ENCODE measurements at regions of chr16 and their contacts with region 1.

Region 1: GRCh38 chr16:80526425-80527061 is 14.2 kb upstream of the DYNLRB2 start:
- DNase-seq: peak; percentile 7
- H3K4me3 ChIP-seq: no peak overlapping the region
- H3K27me3 ChIP-seq: no peaks in the 10 kb centered on the region
- CTCF ChIP-seq: peak; percentile 89

Region 2: GRCh38 chr16:80515374-80515773 is 11.2 kb before region 1 on chr16:
- CTCF ChIA-PET with region 1: interaction called, 10 read pairs
- POLR2A ChIA-PET with region 1: no interaction called
- DNase-seq: no peak
- H3K4me3 ChIP-seq: no peak overlapping the region
- H3K27me3 ChIP-seq: no peaks in the 10 kb centered on the region
- CTCF ChIP-seq: no peak

Region 3: DNA sequence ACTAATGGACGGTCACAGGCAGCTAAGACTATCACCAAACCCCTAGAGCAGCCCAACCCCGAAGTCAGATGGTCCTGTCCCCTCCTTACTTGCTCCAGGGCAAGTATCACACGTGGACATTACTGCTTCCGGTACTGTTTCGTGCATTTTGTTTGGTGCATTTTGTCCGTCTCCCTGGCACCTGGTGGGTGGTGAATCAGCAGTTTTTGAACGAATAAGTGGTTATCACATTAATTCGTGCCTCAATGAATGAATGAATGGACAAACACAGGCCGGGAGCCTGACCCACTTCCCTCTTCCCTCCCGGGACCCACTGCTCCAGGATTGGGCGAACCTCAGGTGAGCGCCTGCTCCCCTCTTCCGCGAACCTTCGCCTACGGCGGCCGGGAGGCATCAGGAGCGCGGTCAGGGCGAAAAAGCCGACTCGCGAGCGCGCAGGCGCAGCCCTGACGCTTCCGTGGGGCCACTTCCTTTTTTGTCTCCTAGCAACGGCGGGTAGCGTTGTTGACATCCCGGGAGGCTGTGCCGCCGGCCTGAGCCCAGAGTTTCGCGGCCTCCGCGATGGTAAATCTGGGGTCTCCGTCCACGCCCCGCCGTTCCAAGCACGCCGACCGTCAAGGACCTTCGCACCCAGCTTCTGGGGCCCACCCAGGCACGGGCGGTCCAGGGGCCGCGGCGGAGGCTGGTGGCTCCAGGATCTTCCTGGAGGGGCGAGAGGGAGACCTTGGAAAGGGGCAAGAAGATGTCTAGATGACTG is 14.2 kb after region 1 on chr16 and contains the start of gene DYNLRB2:
- CTCF ChIA-PET with region 1: interaction called, 14 read pairs
- POLR2A ChIA-PET with region 1: no interaction called
- DNase-seq: peak; percentile 58
- H3K4me3 ChIP-seq: peak within 1 kb of the TSS; percentile 70
- H3K27me3 ChIP-seq: no peaks in the 10 kb centered on the region
- CTCF ChIP-seq: no peak
- polyA plus RNA-seq, gene DYNLRB2: 0.50 and 1.4 TPM in 2 replicates

Region 4: DNA sequence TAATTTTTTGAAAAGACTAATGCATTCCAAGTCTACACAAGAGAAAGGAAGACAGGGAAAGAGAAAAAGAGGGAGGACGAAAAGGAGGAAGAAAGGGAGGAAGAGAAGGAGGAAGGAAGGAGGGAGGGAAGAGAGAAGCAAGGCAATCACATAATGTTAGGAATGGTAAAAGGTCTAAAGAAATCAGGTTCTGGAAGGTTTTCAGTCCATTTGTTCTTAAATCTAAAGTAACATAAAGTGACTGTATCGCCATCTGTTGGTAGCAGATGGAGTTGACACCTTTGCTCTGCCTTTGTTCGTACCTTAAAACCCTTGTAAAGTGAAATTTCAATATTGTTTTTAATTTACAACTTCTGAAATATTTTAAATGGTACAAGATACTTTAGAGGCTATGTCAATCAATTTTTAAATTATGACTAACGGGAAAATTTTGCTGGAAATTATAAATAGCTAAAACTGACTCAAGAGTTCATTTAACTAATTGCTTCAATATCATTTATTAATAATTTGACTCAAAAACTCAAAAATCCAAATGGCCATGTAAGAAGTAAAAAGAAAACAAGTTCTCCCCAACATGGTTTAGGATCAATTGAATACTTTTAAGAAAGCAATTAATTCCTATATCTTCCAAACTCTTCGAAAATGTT is 298.3 kb after region 1 on chr16:
- CTCF ChIA-PET with region 1: interaction called, 14 read pairs
- POLR2A ChIA-PET with region 1: no interaction called
- DNase-seq: peak; percentile 11
- H3K4me3 ChIP-seq: no peak overlapping the region
- H3K27me3 ChIP-seq: peaks cover 2% of the 10 kb centered on the region; the same call in 1 of the 2 replicates
- CTCF ChIP-seq: peak; percentile 82

Measured in BJ (cell line).